HepG2 (cell line): ENCODE measurements at regions of chr6 and their contacts with region 1.

Region 1: GRCh38 chr6:35297601-35298481 is at the start of gene DEF6:
- DNase-seq: peak; percentile 88
- ATAC-seq: peak; percentile 95
- H3K4me3 ChIP-seq: peak within 1 kb of the TSS; percentile 55 to 81 (median 77)
- H3K27ac ChIP-seq: no peak within 1 kb of the TSS
- H3K4me1 ChIP-seq: peaks cover 26% of the 10 kb centered on the region
- H3K27me3 ChIP-seq: no peaks in the 10 kb centered on the region
- CTCF ChIP-seq: peak; percentile 100
- EP300 ChIP-seq: peak; percentile 46 to 56; a peak in 2 of 4 replicates
- POLR2A ChIP-seq: peak; percentile 64 to 74
- RAD21 ChIP-seq: peak; percentile 100
- total RNA-seq, gene DEF6: 9.6 and 10.0 TPM in 2 replicates

Region 2: GRCh38 chr6:35318196-35319171 is 20.6 kb after region 1 on chr6:
- CTCF ChIA-PET with region 1: no interaction called
- POLR2A ChIA-PET with region 1: interaction called, 10 read pairs
- in situ Hi-C with region 1: no loop called
- intact Hi-C with region 1: loop called (anchors 1 kb)
- DNase-seq: peak; percentile 86
- ATAC-seq: peak; percentile 98
- H3K4me3 ChIP-seq: peak overlapping the region; percentile 58 to 81 (median 61)
- H3K27ac ChIP-seq: peak overlapping the region; percentile 70
- H3K4me1 ChIP-seq: peaks cover 20% of the 10 kb centered on the region
- H3K27me3 ChIP-seq: no peaks in the 10 kb centered on the region
- CTCF ChIP-seq: peak; percentile 63
- EP300 ChIP-seq: peak; percentile 32 to 62; a peak in 1 of 4 replicates
- POLR2A ChIP-seq: peak; percentile 76 to 78
- RAD21 ChIP-seq: peak; percentile 45

Region 3: DNA sequence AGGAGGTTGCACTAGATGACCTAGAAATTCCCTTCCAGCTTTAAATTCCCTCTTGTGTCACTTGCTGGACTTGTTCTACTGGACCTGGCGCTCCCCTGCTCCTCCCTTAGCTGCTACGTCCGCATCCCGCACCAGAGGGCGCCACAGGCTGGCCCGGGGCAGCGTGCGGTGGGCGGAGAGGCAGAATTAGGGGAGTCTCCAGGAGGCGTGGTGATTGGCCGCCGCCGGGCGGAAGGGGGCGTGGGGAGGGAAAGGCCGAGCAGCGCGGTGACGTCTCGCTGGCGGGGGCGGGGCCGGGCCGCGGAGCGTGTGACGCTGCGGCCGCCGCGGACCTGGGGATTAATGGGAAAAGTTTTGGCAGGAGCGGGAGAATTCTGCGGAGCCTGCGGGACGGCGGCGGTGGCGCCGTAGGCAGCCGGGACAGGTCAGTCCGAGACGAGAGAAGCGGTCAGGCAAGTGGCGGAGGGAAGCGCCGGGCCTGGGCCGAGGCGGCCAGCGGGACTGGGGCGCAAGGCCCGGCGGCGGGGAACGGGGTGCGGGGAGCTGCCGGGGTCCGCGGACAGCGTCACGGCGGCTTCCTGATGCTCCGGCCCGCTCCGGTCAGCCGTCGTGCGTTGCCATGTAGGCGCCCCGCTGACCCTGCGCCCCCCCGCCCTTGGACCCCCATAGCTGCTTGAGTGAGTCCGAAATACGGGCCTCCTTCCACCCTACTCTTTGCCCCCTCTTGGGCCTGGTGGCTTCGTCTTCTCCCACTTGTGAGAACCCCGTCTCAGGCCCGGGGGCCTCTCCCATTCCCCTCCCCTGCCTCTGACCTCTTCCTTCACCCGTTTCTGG is 44.6 kb after region 1 on chr6 and contains the start of gene PPARD:
- CTCF ChIA-PET with region 1: interaction called, 3 read pairs
- POLR2A ChIA-PET with region 1: no interaction called
- in situ Hi-C with region 1: no loop called
- intact Hi-C with region 1: loop called (anchors 1 kb)
- DNase-seq: peak; percentile 93
- ATAC-seq: peak; percentile 95
- H3K4me3 ChIP-seq: peak within 1 kb of the TSS; percentile 74 to 89 (median 87)
- H3K27ac ChIP-seq: peak within 1 kb of the TSS; percentile 46
- H3K4me1 ChIP-seq: peaks cover 40% of the 10 kb centered on the region
- H3K27me3 ChIP-seq: no peaks in the 10 kb centered on the region; a peak in 1 of 5 replicates
- CTCF ChIP-seq: peak; percentile 100
- EP300 ChIP-seq: peak in 1 of 2 experiments; percentile 36; a peak in 1 of 4 replicates
- POLR2A ChIP-seq: peak; percentile 59 to 66
- RAD21 ChIP-seq: peak; percentile 100
- total RNA-seq, gene PPARD: 5.8 and 6.1 TPM in 2 replicates

Region 4: GRCh38 chr6:35468181-35468979 is 170.5 kb after region 1 on chr6 and contains the start of gene RPL10A:
- CTCF ChIA-PET with region 1: interaction called, 28 read pairs
- POLR2A ChIA-PET with region 1: no interaction called
- in situ Hi-C with region 1: loop called (anchors 5 kb)
- intact Hi-C with region 1: loop called (anchors 1 kb)
- DNase-seq: peak; percentile 98
- ATAC-seq: peak; percentile 83
- H3K4me3 ChIP-seq: peak within 1 kb of the TSS; percentile 85 to 98 (median 86)
- H3K27ac ChIP-seq: peak within 1 kb of the TSS; percentile 92
- H3K4me1 ChIP-seq: peaks cover 49% of the 10 kb centered on the region
- H3K27me3 ChIP-seq: no peaks in the 10 kb centered on the region; a peak in 1 of 5 replicates
- CTCF ChIP-seq: peak; percentile 100
- EP300 ChIP-seq: peak in 1 of 2 experiments; percentile 50; a peak in 1 of 4 replicates
- POLR2A ChIP-seq: peak in 1 of 2 experiments; percentile 100; a peak in 2 of 4 replicates
- RAD21 ChIP-seq: peak; percentile 98
- total RNA-seq, gene RPL10A: 1,854 and 2,285 TPM in 2 replicates

Region 5: GRCh38 chr6:35731736-35732532 is 434.1 kb after region 1 on chr6:
- CTCF ChIA-PET with region 1: no interaction called
- POLR2A ChIA-PET with region 1: no interaction called
- in situ Hi-C with region 1: no loop called
- intact Hi-C with region 1: loop called (anchors 10 kb)
- DNase-seq: peak; percentile 96
- ATAC-seq: peak; percentile 53
- H3K4me3 ChIP-seq: peak overlapping the region; percentile 63 to 88 (median 74)
- H3K27ac ChIP-seq: peak overlapping the region; percentile 87
- H3K4me1 ChIP-seq: peaks cover 64% of the 10 kb centered on the region
- H3K27me3 ChIP-seq: no peaks in the 10 kb centered on the region; a peak in 1 of 5 replicates
- CTCF ChIP-seq: peak; percentile 48
- EP300 ChIP-seq: peak in 1 of 2 experiments; percentile 71; a peak in 1 of 4 replicates
- POLR2A ChIP-seq: peak in 1 of 2 experiments; percentile 80; a peak in 2 of 4 replicates
- RAD21 ChIP-seq: peak; percentile 15